Astrocyte of the cerebellum (primary cell): ENCODE measurements at regions of chr18 and their contacts with region 1.

Region 1: GRCh38 chr18:77114415-77115191 is 18.0 kb downstream of the MBP start:
- DNase-seq: no peak
- H3K4me3 ChIP-seq: no peak overlapping the region
- CTCF ChIP-seq: no peak

Region 2: DNA sequence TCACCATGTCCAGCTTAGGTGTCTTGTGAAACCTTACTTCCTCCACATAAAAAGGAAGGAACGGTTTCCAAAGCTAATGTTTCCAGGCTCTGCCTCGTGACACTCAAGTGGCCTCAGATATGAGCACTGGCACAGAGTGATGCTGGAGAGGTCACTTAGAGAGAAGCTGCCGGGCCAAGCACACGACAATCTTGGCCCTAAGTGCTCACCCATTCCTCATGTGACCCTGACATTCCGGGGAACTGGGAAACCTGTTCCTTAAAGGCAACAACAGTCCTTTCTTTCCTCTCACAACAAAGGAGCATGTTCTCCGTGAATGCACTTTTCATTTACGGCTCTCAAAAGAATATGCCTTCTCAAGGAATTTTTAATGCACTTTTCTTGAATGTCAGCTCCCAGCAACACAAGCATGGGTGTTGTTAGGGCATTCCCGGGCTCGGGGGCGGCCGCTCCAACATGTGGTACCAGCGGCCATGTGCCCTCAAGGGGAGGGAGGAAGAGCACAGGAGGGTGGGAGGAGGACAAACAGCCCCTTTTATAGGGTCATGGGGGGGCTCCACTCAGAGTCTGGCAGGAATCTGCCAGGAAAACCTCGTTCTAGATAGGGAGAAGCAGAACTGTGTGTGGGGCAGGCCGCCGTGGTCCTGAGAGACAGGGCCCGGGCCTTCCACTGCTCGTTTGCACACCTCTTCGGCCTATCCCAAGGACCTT is 100.6 kb before region 1 on chr18:
- in situ Hi-C with region 1: no loop called
- DNase-seq: no peak
- H3K4me3 ChIP-seq: no peak overlapping the region
- CTCF ChIP-seq: no peak

Region 3: DNA sequence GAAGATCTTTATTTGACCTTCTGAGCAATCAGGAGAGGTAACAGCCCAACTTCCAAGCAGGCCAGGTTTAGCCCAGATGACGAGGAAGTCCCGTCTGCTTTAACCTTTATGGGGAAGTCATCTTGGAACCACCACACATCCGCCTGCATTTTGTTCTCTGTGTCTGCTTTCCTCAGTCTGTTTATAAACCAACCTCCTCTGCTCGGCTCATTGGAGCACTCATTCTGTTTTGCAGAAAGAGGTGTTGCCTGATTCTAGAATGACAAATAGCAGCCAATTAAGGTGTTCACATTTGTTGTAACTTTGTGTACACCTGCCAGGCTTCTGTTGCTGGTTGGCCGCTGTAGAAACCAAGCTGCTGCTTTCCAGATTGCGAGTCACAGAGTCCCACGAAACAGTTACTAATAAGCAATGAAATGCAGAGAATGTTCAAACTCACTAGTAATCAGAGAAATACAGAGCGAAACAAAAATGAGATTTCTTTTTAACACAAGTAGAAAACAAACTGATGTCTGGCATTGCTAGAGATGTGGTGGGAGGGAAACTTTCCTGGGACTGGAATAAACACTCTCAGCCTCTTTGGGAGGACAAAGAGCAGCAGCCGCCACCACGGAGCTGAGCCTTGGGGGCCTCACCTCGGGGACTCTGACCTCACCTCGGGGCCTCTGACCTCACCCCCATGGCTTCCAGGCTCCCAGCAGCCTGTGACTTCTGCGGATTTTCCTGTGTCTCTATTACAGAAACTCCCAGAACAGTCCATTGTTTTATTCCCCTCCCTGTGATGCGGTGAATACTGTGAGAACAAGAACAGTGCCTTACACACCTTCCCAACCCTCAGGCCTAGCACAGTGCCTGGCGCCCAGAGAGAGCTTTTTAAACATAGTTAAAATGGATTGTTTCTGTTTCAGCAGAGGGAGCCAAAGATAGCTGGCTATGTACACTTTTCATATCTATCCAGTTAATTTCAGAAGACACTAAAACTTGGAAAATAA is 46.0 kb before region 1 on chr18:
- in situ Hi-C with region 1: no loop called
- DNase-seq: no peak
- H3K4me3 ChIP-seq: no peak overlapping the region
- CTCF ChIP-seq: peak; percentile 21

Region 4: DNA sequence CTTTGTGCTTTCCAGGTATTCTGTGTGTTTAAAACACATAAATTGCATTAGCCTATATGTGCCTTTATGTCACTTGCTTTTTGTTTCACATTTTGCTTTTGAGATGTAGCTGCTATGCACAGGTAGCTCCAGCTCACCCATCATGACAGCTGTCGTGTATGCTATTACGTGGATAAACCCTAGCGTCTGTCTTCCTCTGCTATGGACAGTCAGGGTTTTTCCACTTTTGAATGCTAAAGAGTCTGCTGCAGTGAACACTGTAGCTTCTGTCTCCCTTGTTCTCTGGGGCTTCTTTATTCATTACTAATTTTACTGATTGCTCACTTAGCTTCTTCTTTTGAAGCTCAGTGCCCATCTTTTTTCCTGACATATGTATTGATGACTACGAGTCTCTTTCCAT is 42.7 kb after region 1 on chr18:
- in situ Hi-C with region 1: loop called (anchors 5 kb)
- DNase-seq: no peak
- H3K4me3 ChIP-seq: no peak overlapping the region
- CTCF ChIP-seq: no peak

Region 5: DNA sequence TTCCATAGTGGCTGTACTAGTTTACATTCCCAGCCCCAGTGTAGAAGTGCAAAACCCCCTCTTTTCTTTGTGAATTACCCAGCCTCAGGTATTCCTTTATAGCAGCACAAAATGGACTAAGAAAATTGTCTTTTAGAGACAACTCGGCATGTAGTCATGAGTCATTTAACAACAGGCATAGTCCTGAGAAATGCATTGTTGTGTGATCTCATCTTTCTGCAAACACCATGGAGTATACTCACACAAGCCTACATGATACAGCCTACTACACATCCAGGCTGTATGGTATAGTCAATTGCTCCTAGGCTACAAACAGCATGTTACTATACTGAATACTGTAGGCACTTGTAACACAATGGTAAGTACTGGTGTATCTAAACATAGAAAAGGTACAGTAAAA is 62.4 kb after region 1 on chr18:
- in situ Hi-C with region 1: no loop called
- DNase-seq: peak; percentile 3
- H3K4me3 ChIP-seq: no peak overlapping the region
- CTCF ChIP-seq: no peak